B cell (primary cell): ENCODE measurements at regions of chr13 and their contacts with region 1.

Region 1: GRCh38 chr13:27482983-27483382 is 32.6 kb upstream of the MTIF3 start:
- DNase-seq: peak; percentile 90
- ATAC-seq: peak; percentile 99
- H3K4me3 ChIP-seq: peak overlapping the region in 4 of 5 experiments; percentile 11 to 43 (median 30)
- H3K4me3 Mint-ChIP-seq: peak overlapping the region; percentile 81
- H3K27ac ChIP-seq: peak overlapping the region; percentile 71 to 82
- H3K27ac Mint-ChIP-seq: peak overlapping the region; percentile 93
- H3K4me1 ChIP-seq: peaks cover 37 to 45% of the 10 kb centered on the region in 2 donors
- H3K4me1 Mint-ChIP-seq: peaks cover 41% of the 10 kb centered on the region
- H3K27me3 ChIP-seq: no peaks in the 10 kb centered on the region
- H3K27me3 Mint-ChIP-seq: no peaks in the 10 kb centered on the region
- CTCF ChIP-seq: no peak

Region 2: GRCh38 chr13:27455331-27455855 is 27.6 kb before region 1 on chr13:
- CTCF ChIA-PET with region 1: interaction called, 3 read pairs
- POLR2A ChIA-PET with region 1: interaction called, 7 read pairs
- intact Hi-C with region 1: loop called (anchors 1 kb)
- DNase-seq: peak; percentile 45
- ATAC-seq: no peak
- H3K4me3 ChIP-seq: peak overlapping the region; percentile 8 to 86 (median 56)
- H3K4me3 Mint-ChIP-seq: peak overlapping the region; percentile 94
- H3K27ac ChIP-seq: peak overlapping the region; percentile 49 to 68
- H3K27ac Mint-ChIP-seq: peak overlapping the region; percentile 95
- H3K4me1 ChIP-seq: peaks cover 22% of the 10 kb centered on the region in 2 donors
- H3K4me1 Mint-ChIP-seq: peaks cover 25% of the 10 kb centered on the region
- H3K27me3 ChIP-seq: no peaks in the 10 kb centered on the region
- H3K27me3 Mint-ChIP-seq: no peaks in the 10 kb centered on the region
- CTCF ChIP-seq: no peak